Activated naive CD4-positive, alpha-beta T cell treated with anti-CD3 and anti-CD28 coated beads for 36 hours (primary cell): ENCODE measurements at regions of chr17 and their contacts with region 1.

Region 1: GRCh38 chr17:7045909-7046724 is 2.2 kb upstream of the SLC16A11 start:
- DNase-seq: peak; percentile 67
- H3K4me3 Mint-ChIP-seq: peak overlapping the region; percentile 52
- H3K27ac Mint-ChIP-seq: peak overlapping the region; percentile 52
- H3K4me1 Mint-ChIP-seq: peaks cover 36% of the 10 kb centered on the region
- H3K27me3 Mint-ChIP-seq: no peaks in the 10 kb centered on the region

Region 2: DNA sequence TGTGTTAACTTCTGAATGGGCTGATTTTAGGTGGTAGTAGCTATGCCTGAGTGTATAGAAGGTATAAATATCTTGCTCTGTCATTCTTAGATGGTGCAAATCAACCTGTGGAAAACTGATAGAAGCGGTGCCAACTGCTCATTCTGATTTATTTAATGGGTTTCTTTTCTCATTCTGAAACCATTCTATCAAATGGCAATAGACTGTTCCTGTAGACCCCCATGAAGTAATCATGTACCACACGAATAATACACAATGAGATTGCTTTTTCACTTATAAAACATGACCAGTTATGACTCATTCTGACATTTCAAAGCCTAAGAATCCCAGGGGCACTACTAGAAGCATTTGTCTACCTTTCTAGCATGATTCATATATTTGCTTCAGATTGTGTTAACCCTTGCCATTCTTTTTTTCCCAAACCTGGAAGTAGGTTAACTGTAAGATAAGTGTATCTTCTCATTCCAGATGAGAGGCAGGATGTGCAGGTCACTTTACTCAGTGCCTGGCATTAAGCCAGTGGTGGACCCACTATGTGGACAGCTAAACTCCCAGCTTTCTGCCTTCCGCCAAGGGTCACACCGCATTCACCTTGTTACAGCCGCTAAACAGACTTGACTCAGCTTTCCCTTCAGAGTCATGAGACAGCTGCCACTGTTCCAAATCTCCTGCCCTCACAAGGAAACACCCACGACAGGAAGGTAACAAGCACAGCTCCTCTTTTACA is 14.2 kb after region 1 on chr17:
- CTCF ChIA-PET with region 1: interaction called, 16 read pairs
- intact Hi-C with region 1: loop called (anchors 1 kb)
- DNase-seq: peak; percentile 70
- H3K4me3 Mint-ChIP-seq: no peak overlapping the region
- H3K27ac Mint-ChIP-seq: peak overlapping the region; percentile 86
- H3K4me1 Mint-ChIP-seq: peaks cover 24% of the 10 kb centered on the region
- H3K27me3 Mint-ChIP-seq: peaks cover 2% of the 10 kb centered on the region

Region 3: DNA sequence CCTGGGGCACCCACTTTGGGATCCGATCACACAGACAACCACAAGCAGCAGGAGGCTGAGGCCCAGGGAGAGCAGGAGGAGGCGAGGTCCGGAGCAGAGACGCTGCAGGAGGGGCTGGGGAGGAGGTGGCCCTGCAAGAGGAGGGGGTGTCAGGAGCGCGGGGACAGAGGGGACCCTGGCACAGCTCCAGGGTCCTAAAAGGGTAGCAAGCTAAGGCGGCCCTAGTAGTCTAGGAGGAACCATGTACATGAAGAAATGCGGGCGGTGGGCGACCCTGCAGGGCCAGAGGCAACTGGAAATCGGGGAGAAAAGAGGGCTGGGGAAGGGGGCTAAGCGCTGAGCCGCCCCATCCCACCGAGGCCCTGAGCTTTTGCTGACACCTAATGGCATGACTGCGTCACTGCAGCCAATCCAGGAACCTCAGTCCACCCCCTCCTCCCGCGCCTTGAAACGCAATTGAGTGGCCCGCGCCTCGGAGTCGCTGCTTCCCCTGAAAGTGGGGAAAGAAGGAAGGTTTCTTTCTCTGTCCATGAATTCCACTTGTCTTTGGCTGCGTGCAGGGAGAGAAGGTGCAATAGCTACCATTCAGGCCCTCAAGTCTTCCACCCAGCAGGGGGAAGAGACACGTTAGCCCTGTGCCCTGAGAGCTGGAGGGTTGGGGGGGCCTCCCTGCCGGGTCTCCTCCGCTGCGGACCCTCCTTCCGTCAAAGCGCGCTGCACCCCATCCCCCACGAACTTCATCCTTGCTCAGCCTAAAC is 131.3 kb after region 1 on chr17:
- CTCF ChIA-PET with region 1: interaction called, 18 read pairs
- intact Hi-C with region 1: no loop called
- DNase-seq: peak; percentile 78
- H3K4me3 Mint-ChIP-seq: peak overlapping the region; percentile 61
- H3K27ac Mint-ChIP-seq: no peak overlapping the region
- H3K4me1 Mint-ChIP-seq: peaks cover 11% of the 10 kb centered on the region
- H3K27me3 Mint-ChIP-seq: peaks cover 6% of the 10 kb centered on the region

Region 4: DNA sequence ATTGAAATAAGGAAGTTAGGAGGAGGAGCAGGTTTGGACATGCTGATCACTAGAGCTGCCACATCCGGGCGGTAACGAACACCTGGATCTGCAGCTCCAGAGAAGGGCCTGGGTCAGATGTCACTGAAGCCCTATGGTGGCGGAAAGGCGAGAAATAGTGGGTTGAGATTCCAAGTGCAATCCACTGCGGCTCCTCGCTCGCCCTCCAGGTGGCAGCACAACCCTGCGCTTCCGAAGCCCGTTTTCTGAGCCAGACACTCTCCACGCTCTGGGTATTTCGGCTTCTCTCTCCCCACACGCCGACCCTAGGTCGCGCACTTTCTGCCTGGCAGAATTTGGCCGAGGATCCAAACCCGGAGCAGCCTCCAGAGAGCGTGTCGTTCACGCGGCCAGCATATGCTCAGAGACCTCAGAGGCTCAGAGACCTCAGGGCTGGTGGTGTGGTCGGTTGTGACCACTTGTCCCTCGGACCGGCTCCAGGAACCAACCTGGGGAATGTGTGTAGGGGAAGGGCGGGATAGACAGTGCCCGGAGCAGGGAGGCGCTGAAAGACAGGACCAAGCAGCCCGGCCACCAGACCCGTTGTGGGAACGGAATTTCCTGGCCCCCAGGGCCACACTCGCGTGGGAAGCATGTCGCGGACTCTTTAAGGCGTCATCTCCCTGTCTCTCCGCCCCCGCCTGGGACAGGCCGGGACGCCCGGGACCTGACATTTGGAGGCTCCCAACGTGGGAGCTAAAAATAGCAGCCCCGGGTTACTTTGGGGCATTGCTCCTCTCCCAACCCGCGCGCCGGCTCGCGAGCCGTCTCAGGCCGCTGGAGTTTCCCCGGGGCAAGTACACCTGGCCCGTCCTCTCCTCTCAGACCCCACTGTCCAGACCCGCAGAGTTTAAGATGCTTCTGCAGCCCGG is 234.7 kb after region 1 on chr17:
- CTCF ChIA-PET with region 1: no interaction called
- intact Hi-C with region 1: loop called (anchors 5 kb)
- DNase-seq: peak; percentile 91
- H3K4me3 Mint-ChIP-seq: peak overlapping the region; percentile 74
- H3K27ac Mint-ChIP-seq: no peak overlapping the region
- H3K4me1 Mint-ChIP-seq: peaks cover 20% of the 10 kb centered on the region
- H3K27me3 Mint-ChIP-seq: peaks cover 17% of the 10 kb centered on the region